Activated CD4-positive, alpha-beta memory T cell treated with anti-CD3 and anti-CD28 coated beads, Interleukin-2, amount 10 ng/mL, durations not matched to agents 7 days and 5 days (primary cell): ENCODE measurements at regions of chr15 and their contacts with region 1.

Region 1: DNA sequence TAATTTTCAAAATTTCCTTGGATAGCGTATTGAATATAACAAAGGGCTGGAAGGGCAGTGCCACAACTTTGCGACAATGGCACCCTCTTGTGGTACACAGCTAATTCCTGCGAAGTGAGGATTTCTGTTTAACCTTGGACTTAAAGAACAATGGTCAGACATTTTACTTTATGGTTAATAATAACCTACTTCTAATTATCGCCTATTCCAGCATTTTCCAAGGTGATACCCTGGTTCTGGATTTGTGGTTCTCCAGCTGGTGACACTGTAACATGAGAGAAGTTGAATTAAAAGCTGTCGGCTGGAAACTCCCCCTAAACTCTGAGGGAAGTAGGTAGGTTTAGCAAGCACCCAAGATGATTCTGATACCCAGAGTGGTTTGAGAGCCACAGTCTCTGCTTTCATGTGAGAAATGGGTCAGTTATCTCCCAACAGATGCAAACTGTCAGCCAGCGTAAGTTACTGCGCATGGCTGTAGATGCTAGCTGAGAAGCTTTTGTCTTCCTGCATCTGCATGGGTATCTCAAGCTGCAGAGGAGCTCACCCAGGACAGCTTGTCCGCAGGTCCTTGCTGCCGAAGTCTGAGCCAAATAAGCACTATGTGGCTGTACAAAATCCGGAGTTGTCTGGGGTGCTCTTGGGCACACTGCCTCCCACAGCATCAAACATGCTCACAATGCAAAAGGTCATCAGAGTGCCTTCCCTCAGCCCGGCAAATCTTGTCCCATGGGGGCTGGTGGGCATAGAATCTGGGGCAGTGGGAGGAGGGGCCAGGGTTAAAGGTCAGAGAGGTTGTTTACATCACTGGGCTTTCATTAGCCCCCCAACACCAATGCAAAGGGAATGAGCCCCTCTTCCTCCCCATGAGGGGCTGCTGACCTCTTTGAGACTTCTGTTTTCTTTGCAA is 6.6 kb upstream of the CHSY1 start:
- DNase-seq: peak; percentile 63
- H3K4me3 Mint-ChIP-seq: no peak overlapping the region
- H3K27ac Mint-ChIP-seq: no peak overlapping the region
- H3K4me1 Mint-ChIP-seq: peaks cover 29% of the 10 kb centered on the region
- H3K27me3 Mint-ChIP-seq: peaks cover 22% of the 10 kb centered on the region

Region 2: GRCh38 chr15:101008158-101009139 is 250.0 kb before region 1 on chr15:
- CTCF ChIA-PET with region 1: interaction called, 120 read pairs
- POLR2A ChIA-PET with region 1: no interaction called
- DNase-seq: peak; percentile 87
- H3K4me3 Mint-ChIP-seq: peak overlapping the region; percentile 83
- H3K27ac Mint-ChIP-seq: no peak overlapping the region
- H3K4me1 Mint-ChIP-seq: peaks cover 23% of the 10 kb centered on the region
- H3K27me3 Mint-ChIP-seq: peaks cover 29% of the 10 kb centered on the region

Region 3: GRCh38 chr15:101070502-101071273 is 187.8 kb before region 1 on chr15:
- CTCF ChIA-PET with region 1: interaction called, 12 read pairs
- POLR2A ChIA-PET with region 1: no interaction called
- DNase-seq: no peak
- H3K4me3 Mint-ChIP-seq: no peak overlapping the region
- H3K27ac Mint-ChIP-seq: peak overlapping the region; percentile 77
- H3K4me1 Mint-ChIP-seq: peaks cover 19% of the 10 kb centered on the region
- H3K27me3 Mint-ChIP-seq: peaks cover under 1% of the 10 kb centered on the region

Region 4: DNA sequence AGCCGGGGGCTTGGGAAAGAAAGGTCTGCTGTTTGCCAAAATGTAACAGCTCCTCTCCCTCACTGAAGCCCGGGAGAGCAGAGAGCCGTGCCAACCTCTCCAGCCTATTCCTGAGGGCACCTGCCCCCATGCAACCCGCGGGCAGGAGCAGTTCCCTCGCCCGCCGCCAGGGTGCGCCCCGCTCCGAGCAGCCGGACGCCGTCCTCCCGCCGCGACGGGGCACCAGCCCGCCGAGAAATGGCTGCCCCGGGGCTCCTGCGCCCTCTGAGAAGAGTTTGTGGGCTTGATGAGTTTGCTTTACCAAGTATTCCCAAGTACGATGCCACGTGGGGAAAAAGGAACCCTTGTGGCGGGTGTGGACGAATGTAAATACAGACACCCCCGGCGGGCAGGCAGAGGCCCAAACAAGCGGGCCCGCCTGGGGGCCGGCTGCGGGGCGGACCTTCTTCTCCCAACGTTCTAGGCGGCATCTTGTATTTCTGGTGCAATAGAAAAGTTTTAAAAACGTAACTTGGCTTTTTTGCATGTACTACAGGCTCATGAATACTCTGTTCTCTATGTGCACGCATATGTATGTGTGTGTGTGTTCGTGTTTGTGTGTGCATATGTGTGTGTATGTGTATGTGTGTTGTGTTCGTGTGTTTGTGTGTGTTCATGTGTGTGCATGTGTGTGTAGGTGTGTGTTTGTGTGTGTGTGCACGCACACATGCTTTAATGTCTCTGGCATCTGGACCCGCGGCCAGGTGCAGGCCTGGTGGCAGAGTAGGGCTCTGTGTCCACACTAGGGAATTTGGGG is 169.5 kb before region 1 on chr15:
- CTCF ChIA-PET with region 1: interaction called, 81 read pairs
- POLR2A ChIA-PET with region 1: no interaction called
- DNase-seq: peak; percentile 81
- H3K4me3 Mint-ChIP-seq: no peak overlapping the region
- H3K27ac Mint-ChIP-seq: peak overlapping the region; percentile 16
- H3K4me1 Mint-ChIP-seq: peaks cover 17% of the 10 kb centered on the region
- H3K27me3 Mint-ChIP-seq: peaks cover 5% of the 10 kb centered on the region

Region 5: DNA sequence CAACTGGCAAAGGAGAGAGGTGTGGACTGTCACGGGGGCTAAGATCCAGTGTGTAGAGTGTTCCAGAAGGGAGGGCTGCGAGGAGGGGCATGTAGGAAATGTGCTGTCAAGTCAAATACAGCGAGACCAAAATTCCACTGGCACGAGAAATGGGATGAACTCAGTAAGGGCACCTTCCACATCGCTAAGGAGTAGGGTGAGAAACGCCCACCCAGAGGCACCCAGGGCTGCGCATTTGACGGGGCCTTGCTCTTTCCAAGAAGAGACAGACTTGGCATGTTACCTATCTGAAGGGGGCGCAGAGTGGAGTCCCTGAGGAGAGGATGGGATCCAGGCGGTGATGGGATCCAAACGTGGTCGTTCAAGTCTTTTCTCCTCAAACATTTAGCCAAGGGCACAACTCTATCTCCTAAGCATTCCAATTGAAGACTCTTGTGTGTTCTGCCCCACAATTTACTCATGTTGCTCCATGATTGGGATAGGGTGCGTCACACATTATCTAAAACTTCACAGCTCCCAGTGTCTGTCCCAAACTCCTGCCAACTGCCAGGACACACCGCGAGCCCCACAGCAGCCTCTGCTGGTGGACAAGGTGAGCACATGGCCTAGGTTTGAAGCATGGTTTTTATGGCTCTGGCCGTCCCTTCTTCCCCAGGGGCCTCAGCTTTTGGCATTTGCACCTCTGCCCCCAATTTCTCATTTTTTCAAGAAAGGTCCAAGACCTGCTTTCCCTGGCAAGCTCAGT is 11.2 kb after region 1 on chr15:
- CTCF ChIA-PET with region 1: interaction called, 11 read pairs
- POLR2A ChIA-PET with region 1: interaction called, 8 read pairs
- DNase-seq: no peak
- H3K4me3 Mint-ChIP-seq: no peak overlapping the region
- H3K27ac Mint-ChIP-seq: no peak overlapping the region
- H3K4me1 Mint-ChIP-seq: peaks cover 8% of the 10 kb centered on the region
- H3K27me3 Mint-ChIP-seq: no peaks in the 10 kb centered on the region